PC-9 (cell line): ENCODE measurements at regions of chr3 and their contacts with region 1.

Region 1: DNA sequence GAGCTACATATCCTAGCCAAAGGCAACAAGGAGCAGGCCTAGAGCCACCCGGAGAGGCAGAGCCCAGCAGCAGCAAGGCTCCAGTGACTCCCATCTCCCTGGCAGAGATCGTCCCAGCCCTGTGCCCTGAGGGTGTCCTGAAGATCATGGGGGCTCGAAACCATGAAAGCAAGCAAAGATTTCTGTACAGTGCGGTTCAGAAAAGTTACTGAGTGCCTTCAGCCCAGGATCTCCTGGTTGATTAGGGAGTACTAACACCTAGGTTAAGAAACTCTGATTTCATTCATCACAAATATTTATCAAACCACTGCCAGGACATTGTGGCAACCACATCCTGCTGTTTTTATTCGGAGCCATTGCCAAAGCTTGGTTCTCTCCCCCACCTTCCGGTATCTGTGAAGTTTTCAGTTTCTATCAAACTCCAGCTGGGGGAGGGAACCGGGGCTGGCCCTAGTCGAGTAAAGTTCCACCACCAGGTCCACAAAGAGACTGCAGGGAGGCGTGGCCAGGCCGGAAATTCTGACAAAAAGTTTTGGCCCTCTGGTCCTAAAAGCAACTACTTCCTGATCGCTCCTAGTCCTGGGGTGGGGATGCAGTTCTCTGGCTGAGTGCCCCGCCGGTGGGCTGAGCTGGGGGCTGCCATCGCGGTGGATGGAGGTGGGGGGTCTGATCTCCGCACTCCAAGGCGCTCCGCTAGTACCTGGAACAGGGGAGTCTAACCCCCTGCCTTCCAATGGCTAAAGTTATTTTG is 1.2 kb downstream of the RAB43 start:
- DNase-seq: peak; percentile 91 to 92
- H3K4me3 ChIP-seq: peak overlapping the region; percentile 70
- H3K27ac ChIP-seq: peak overlapping the region; percentile 90
- H3K4me1 ChIP-seq: peaks cover 17% of the 10 kb centered on the region
- H3K27me3 ChIP-seq: no peaks in the 10 kb centered on the region
- CTCF ChIP-seq: no peak

Region 2: GRCh38 chr3:128650096-128651050 is 470.1 kb before region 1 on chr3 and contains the start of gene RPN1:
- CTCF ChIA-PET with region 1: no interaction called
- POLR2A ChIA-PET with region 1: interaction called, 18 read pairs
- intact Hi-C with region 1: no loop called
- DNase-seq: peak; percentile 90 to 98
- H3K4me3 ChIP-seq: peak within 1 kb of the TSS; percentile 98
- H3K27ac ChIP-seq: peak within 1 kb of the TSS; percentile 92
- H3K4me1 ChIP-seq: peaks cover 9% of the 10 kb centered on the region
- H3K27me3 ChIP-seq: no peaks in the 10 kb centered on the region
- CTCF ChIP-seq: no peak
- total RNA-seq, gene RPN1: 185 and 191 TPM in 2 replicates

Region 3: GRCh38 chr3:128895843-128896697 is 224.4 kb before region 1 on chr3:
- CTCF ChIA-PET with region 1: no interaction called
- POLR2A ChIA-PET with region 1: no interaction called
- intact Hi-C with region 1: no loop called
- DNase-seq: no peak
- H3K4me3 ChIP-seq: no peak overlapping the region
- H3K27ac ChIP-seq: no peak overlapping the region
- H3K4me1 ChIP-seq: no peaks in the 10 kb centered on the region
- H3K27me3 ChIP-seq: no peaks in the 10 kb centered on the region
- CTCF ChIP-seq: no peak

Region 4: DNA sequence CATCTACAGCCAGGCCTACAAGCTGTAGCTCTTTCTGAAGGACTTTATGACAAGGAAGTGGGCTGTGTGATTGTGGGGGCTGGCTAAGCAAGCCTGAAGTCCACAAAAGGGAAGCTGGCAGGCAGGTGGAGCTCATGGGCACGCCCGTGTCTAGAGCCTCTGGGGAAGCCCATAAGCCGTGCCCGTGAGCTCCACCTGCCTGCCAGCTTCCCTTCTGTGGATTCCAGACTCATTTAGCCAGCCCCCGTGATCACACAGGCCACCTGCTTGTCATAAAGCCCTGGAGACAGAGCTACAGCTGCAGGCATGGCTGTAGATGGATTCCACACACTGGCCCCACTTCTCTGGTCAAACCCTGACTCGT is 104.1 kb before region 1 on chr3:
- CTCF ChIA-PET with region 1: no interaction called
- POLR2A ChIA-PET with region 1: interaction called, 14 read pairs
- intact Hi-C with region 1: no loop called
- DNase-seq: peak; percentile 58 to 68
- H3K4me3 ChIP-seq: no peak overlapping the region
- H3K27ac ChIP-seq: 0 out of 2 replicates have a peak overlapping the region, but pooled peaks have one; percentile 33
- H3K4me1 ChIP-seq: peaks cover 16% of the 10 kb centered on the region
- H3K27me3 ChIP-seq: no peaks in the 10 kb centered on the region
- CTCF ChIP-seq: no peak

Region 5: GRCh38 chr3:129058441-129059200 is 61.8 kb before region 1 on chr3:
- CTCF ChIA-PET with region 1: interaction called, 16 read pairs
- POLR2A ChIA-PET with region 1: interaction called, 3 read pairs
- intact Hi-C with region 1: loop called (anchors 5 kb)
- DNase-seq: peak in 1 of 2 experiments; percentile 47
- H3K4me3 ChIP-seq: no peak overlapping the region
- H3K27ac ChIP-seq: no peak overlapping the region
- H3K4me1 ChIP-seq: no peaks in the 10 kb centered on the region
- H3K27me3 ChIP-seq: no peaks in the 10 kb centered on the region
- CTCF ChIP-seq: no peak

Region 6: GRCh38 chr3:129104498-129105079 is 15.8 kb before region 1 on chr3:
- CTCF ChIA-PET with region 1: no interaction called
- POLR2A ChIA-PET with region 1: interaction called, 23 read pairs
- intact Hi-C with region 1: no loop called
- DNase-seq: no peak
- H3K4me3 ChIP-seq: no peak overlapping the region
- H3K27ac ChIP-seq: no peak overlapping the region
- H3K4me1 ChIP-seq: no peaks in the 10 kb centered on the region
- H3K27me3 ChIP-seq: no peaks in the 10 kb centered on the region
- CTCF ChIP-seq: no peak

Region 7: DNA sequence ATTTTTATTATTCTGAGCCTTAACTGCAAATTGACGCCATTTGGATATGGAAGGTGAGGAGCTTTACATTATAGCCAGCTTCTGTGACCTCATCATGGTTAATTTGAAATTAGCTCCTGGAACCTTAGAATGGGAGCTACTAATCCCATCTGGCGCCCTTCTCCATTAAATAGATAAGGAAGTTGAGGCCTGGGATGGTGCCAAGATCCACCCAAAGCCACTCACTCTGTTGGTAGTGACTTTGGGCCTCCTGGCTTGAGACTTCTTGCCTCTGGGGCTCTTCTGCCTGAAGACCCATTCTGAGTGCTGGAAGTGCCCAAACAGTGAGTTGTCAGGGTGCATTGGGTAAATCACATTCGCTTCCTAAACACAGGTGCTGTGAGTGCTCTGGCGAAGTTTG is 146.2 kb after region 1 on chr3:
- CTCF ChIA-PET with region 1: interaction called, 16 read pairs
- POLR2A ChIA-PET with region 1: no interaction called
- intact Hi-C with region 1: no loop called
- DNase-seq: no peak
- H3K4me3 ChIP-seq: no peak overlapping the region
- H3K27ac ChIP-seq: no peak overlapping the region
- H3K4me1 ChIP-seq: no peaks in the 10 kb centered on the region
- H3K27me3 ChIP-seq: no peaks in the 10 kb centered on the region
- CTCF ChIP-seq: no peak